ENCODE measurements at regions of chr20 and their contacts with region 1.

Region 1: GRCh38 chr20:20017001-20017843 is at the start of gene NAA20:
- DNase-seq: peak; percentile 75 to 93 (median 87)
- ATAC-seq: peak; percentile 97 to 99 (median 98)
- H3K4me3 ChIP-seq: peak within 1 kb of the TSS; percentile 68 to 72
- H3K4me3 Mint-ChIP-seq: peak within 1 kb of the TSS; percentile 86 to 90 (median 89)
- H3K27ac ChIP-seq: peak within 1 kb of the TSS; percentile 39
- H3K27ac Mint-ChIP-seq: peak within 1 kb of the TSS; percentile 91 to 94
- H3K4me1 ChIP-seq: peaks cover 4 to 37% of the 10 kb centered on the region in 2 experiments
- H3K4me1 Mint-ChIP-seq: peaks cover 60 to 63% (median 61%) of the 10 kb centered on the region in 3 donors
- H3K27me3 ChIP-seq: no peaks in the 10 kb centered on the region
- H3K27me3 Mint-ChIP-seq: no peaks in the 10 kb centered on the region
- total RNA-seq, gene NAA20: 21.7 to 35.6 (median 35.0) TPM

Region 2: GRCh38 chr20:19995220-19995863 is 21.9 kb before region 1 on chr20:
- CTCF ChIA-PET with region 1: interaction called in 1 of 2 experiments, 11 read pairs
- POLR2A ChIA-PET with region 1: no interaction called
- DNase-seq: peak in 15 of 35 experiments; percentile 3 to 66 (median 15)
- ATAC-seq: peak in 1 of 4 experiments; percentile 51
- H3K4me3 ChIP-seq: no peak overlapping the region
- H3K4me3 Mint-ChIP-seq: no peak overlapping the region
- H3K27ac ChIP-seq: no peak overlapping the region
- H3K27ac Mint-ChIP-seq: no peak overlapping the region
- H3K4me1 ChIP-seq: no peaks in the 10 kb centered on the region
- H3K4me1 Mint-ChIP-seq: no peaks in the 10 kb centered on the region
- H3K27me3 ChIP-seq: peaks cover 0 to 15% of the 10 kb centered on the region in 2 experiments
- H3K27me3 Mint-ChIP-seq: peaks cover 6 to 13% of the 10 kb centered on the region in 2 donors

Region 3: GRCh38 chr20:20052074-20052970 is 35.1 kb after region 1 on chr20 and contains the starts of genes CFAP61 and CRNKL1:
- CTCF ChIA-PET with region 1: interaction called, 5 to 14 read pairs
- POLR2A ChIA-PET with region 1: interaction called, 6 to 9 read pairs
- DNase-seq: peak; percentile 93 to 100 (median 96)
- ATAC-seq: peak; percentile 93 to 97 (median 95)
- H3K4me3 ChIP-seq: peak within 1 kb of the TSS; percentile 75 to 76
- H3K4me3 Mint-ChIP-seq: peak within 1 kb of the TSS; percentile 90 to 99 (median 98)
- H3K27ac ChIP-seq: peak within 1 kb of the TSS; percentile 71
- H3K27ac Mint-ChIP-seq: peak within 1 kb of the TSS; percentile 98 to 99
- H3K4me1 ChIP-seq: peaks cover 7 to 8% of the 10 kb centered on the region in 2 experiments
- H3K4me1 Mint-ChIP-seq: peaks cover 28% of the 10 kb centered on the region in 3 donors
- H3K27me3 ChIP-seq: no peaks in the 10 kb centered on the region
- H3K27me3 Mint-ChIP-seq: peaks cover 6 to 7% of the 10 kb centered on the region in 2 donors
- total RNA-seq, gene CFAP61: not detected
- total RNA-seq, gene CRNKL1: 17.8 to 27.0 (median 24.8) TPM

Measured in T-cell (primary cell).